ENCODE measurements at regions of chr1 and their contacts with region 1.

Region 1: DNA sequence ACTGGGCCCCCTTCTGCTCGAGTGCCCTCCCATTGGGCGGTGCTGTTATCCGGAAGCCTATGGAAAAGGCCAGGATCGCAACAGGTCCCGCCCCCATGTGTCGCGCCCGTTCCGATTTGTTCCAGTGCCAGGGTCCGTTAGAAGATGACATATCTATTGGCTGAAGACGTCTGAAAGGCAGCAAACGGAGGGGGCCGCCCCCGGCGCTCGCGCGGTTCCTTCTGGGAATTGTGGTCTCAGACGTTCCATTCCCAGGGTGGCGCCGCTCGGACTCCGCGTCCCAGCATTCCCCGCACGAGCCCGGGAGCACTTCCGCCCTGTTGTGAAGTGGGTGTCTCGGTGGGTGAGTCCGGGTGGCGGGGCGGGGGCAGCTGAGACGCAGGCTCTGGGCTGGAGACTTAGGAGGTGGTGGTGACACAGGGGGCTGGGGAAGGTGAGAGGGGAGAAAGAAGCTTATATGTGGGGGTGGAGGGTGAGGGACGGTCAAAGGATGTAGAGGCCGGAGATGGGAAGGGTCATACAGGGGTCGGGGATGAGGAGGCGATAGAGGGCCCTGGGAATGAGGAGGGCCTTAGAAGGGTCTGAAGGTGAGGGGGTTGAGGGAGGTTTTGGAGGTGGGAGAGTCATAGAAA is at the start of gene ZSCAN20:
- DNase-seq: peak; percentile 98
- H3K4me3 Mint-ChIP-seq: peak within 1 kb of the TSS; percentile 87
- H3K27ac Mint-ChIP-seq: peak within 1 kb of the TSS; percentile 98
- H3K4me1 Mint-ChIP-seq: peaks cover 24% of the 10 kb centered on the region
- H3K27me3 Mint-ChIP-seq: no peaks in the 10 kb centered on the region
- CTCF ChIP-seq: no peak
- total RNA-seq, gene ZSCAN20: 5.1 and 8.2 TPM in 2 replicates

Region 2: DNA sequence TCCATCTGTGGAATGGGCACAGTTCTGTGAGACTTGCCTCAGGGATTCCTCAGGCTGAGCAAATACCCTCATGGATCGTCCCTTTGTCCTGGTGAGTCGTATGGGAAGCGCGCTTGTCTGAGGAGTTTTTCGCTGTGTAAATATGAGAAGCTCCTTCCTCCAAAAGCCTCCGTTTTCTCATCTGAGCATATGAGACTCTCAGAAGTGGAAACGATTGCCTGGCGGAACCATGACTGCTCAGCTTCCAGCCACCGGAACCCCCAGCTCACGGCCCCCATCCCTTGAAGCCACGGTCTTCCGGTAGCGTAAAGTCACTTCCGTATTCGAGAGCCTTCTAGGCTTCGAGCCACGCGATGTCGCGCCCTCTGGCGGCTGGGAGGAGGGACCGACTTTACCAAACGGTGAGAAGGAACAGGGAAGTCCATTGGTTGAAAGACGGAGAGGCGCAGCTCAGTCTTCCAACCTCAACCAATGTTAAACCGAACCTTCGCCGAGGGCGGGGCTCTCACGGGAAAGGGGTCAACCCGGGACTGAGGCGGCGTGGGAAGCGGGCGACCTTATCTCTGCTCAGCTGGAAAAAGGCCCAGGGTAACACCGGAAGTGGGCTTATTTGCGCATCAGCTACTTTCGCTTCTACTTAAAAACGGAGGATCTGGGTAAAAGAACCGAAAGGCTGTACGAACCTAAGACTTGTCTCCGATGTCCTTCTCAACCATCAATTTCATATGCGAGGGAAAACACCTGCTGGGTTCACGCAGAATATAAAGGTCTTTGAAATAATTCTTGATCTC is 345.3 kb before region 1 on chr1:
- CTCF ChIA-PET with region 1: interaction called, 15 read pairs
- POLR2A ChIA-PET with region 1: no interaction called
- intact Hi-C with region 1: no loop called
- DNase-seq: peak; percentile 98
- H3K4me3 Mint-ChIP-seq: peak overlapping the region; percentile 95
- H3K27ac Mint-ChIP-seq: peak overlapping the region; percentile 97
- H3K4me1 Mint-ChIP-seq: peaks cover 30% of the 10 kb centered on the region
- H3K27me3 Mint-ChIP-seq: no peaks in the 10 kb centered on the region
- CTCF ChIP-seq: peak; percentile 85

Region 3: DNA sequence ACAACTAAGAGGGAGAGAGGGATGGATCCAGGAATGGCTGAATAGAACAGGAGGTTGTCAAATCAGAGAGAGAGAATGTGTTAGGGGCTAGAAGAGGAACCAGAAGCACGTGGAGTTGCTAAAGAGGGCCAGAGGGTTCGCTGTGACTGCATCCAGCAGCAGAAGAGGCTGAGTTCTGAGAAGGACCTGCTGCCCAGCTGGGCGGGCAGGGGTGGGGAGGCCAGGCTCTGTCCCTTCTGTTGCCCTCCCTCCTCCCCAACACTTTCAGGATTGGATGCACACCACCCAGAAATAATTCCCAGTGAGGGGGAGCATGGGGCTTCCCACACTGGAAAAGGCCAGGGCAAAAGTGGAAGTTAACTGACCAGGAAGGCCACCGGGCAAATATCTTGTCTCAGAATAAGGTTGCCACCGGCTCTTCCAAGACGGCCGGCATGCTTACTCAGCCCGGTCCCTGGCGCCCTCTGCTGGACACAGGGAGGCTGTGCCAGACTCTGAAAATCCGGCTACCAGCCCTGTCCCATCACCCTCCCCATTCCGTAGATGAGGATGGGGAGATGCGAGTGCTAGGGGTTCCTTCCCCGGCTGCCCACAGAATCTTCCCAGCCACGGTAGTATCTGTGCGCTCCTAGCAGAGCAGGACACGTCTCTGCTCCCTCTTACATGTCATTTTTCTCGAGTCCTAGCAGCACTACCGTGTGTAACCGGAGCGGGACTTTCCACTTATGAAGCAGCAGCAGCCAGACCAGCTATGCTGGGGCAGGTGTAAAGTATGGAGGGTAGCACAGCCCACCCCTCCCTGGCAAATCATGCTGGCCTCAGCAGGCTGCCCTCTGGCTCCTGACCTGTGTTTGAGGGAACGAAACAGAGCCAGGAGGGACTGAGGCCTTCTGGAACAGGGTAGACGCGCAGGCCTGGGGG is 104.7 kb before region 1 on chr1:
- CTCF ChIA-PET with region 1: interaction called, 52 read pairs
- POLR2A ChIA-PET with region 1: no interaction called
- intact Hi-C with region 1: loop called (anchors 1 kb)
- DNase-seq: peak; percentile 84
- H3K4me3 Mint-ChIP-seq: no peak overlapping the region
- H3K27ac Mint-ChIP-seq: no peak overlapping the region
- H3K4me1 Mint-ChIP-seq: peaks cover 6% of the 10 kb centered on the region
- H3K27me3 Mint-ChIP-seq: no peaks in the 10 kb centered on the region
- CTCF ChIP-seq: peak; percentile 95

Region 4: DNA sequence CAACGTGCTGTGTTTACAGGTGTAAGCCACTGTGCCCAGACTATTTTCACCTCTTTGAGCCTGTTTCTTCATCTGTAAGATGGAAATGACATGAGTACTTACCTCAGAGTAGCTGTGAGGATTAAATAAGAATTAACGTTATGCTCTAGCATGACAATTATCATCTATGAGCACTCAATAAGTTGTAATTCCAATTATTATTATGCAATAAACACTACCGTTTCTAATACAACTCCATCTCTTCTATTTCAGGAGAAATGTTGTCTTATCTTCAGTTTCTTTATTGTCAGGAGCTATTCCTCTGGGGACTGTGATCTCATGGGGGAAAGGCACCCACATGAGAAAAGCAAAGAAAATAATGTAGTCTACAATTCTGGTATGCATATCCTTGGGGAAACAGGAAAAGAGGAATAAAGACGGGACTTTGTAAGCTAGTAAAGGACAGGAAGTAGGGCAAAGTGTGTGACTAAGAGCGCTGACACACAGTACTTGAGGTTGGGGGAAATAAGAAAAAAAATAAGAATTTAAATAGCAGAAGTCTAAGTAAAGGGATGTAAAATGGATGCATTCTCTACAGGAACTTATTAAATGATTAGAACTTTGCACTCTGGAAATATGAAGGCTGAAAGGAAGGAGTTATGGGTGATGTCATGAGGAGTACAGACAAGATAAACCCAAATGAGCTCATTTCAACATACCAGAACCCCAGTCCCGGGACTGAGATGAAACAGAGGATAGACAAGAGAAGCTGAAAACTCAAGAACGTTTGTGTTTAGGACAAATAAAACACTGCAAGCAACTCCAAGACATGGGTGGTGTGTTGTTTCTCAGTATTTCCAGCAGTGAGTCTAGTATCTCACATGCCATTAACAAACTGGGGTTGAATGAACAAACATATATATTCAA is 51.3 kb before region 1 on chr1:
- CTCF ChIA-PET with region 1: interaction called, 11 read pairs
- POLR2A ChIA-PET with region 1: no interaction called
- intact Hi-C with region 1: no loop called
- DNase-seq: no peak
- H3K4me3 Mint-ChIP-seq: no peak overlapping the region
- H3K27ac Mint-ChIP-seq: no peak overlapping the region
- H3K4me1 Mint-ChIP-seq: peaks cover 7% of the 10 kb centered on the region
- H3K27me3 Mint-ChIP-seq: no peaks in the 10 kb centered on the region
- CTCF ChIP-seq: no peak

Region 5: GRCh38 chr1:33455539-33456501 is 16.6 kb before region 1 on chr1:
- CTCF ChIA-PET with region 1: interaction called, 82 read pairs
- POLR2A ChIA-PET with region 1: no interaction called
- intact Hi-C with region 1: no loop called
- DNase-seq: peak; percentile 86
- H3K4me3 Mint-ChIP-seq: no peak overlapping the region
- H3K27ac Mint-ChIP-seq: no peak overlapping the region
- H3K4me1 Mint-ChIP-seq: peaks cover 34% of the 10 kb centered on the region
- H3K27me3 Mint-ChIP-seq: no peaks in the 10 kb centered on the region
- CTCF ChIP-seq: peak; percentile 64

Region 6: DNA sequence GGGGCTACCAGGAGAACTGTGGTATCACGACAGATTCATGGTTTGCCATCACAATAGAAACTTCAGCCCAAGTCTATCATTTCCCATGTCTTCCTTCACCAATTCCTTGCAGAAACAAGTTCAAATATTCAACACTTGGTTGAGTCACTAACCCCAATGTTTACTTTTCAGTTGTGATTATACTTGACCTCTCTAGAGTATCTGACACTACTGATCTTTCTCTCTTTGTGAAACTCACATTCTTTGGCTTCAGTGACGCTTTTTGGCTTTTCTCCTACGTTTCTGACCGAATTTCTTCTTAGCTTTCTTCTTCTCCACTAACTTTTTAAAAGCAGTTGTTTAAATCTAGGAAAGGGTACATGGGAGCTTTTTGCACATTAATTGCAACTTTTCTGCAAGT is 342.6 kb after region 1 on chr1:
- CTCF ChIA-PET with region 1: no interaction called
- POLR2A ChIA-PET with region 1: no interaction called
- intact Hi-C with region 1: no loop called
- DNase-seq: peak; percentile 23
- H3K4me3 Mint-ChIP-seq: no peak overlapping the region
- H3K27ac Mint-ChIP-seq: no peak overlapping the region
- H3K4me1 Mint-ChIP-seq: no peaks in the 10 kb centered on the region
- H3K27me3 Mint-ChIP-seq: no peaks in the 10 kb centered on the region
- CTCF ChIP-seq: no peak